Endothelial cell of umbilical vein (primary cell): ENCODE measurements at regions of chr15 and their contacts with region 1.

Region 1: GRCh38 chr15:95652544-95652943 is 678.0 kb upstream of the NR2F2 start:
- DNase-seq: no peak
- H3K4me3 ChIP-seq: no peak overlapping the region
- H3K27ac ChIP-seq: no peak overlapping the region
- H3K4me1 ChIP-seq: no peaks in the 10 kb centered on the region
- H3K27me3 ChIP-seq: no peaks in the 10 kb centered on the region
- CTCF ChIP-seq: no peak
- POLR2A ChIP-seq: no peak

Region 2: GRCh38 chr15:95059418-95059817 is 593.1 kb before region 1 on chr15:
- CTCF ChIA-PET with region 1: no interaction called
- POLR2A ChIA-PET with region 1: no interaction called
- dilution Hi-C with region 1: no loop called
- intact Hi-C with region 1: no loop called
- DNase-seq: no peak
- H3K4me3 ChIP-seq: no peak overlapping the region
- H3K27ac ChIP-seq: no peak overlapping the region
- H3K4me1 ChIP-seq: no peaks in the 10 kb centered on the region
- H3K27me3 ChIP-seq: no peaks in the 10 kb centered on the region
- CTCF ChIP-seq: no peak
- POLR2A ChIP-seq: no peak

Region 3: GRCh38 chr15:95639208-95639607 is 13.3 kb before region 1 on chr15:
- CTCF ChIA-PET with region 1: interaction called, 11 read pairs
- POLR2A ChIA-PET with region 1: no interaction called
- dilution Hi-C with region 1: no loop called
- intact Hi-C with region 1: no loop called
- DNase-seq: no peak
- H3K4me3 ChIP-seq: no peak overlapping the region
- H3K27ac ChIP-seq: no peak overlapping the region
- H3K4me1 ChIP-seq: no peaks in the 10 kb centered on the region
- H3K27me3 ChIP-seq: no peaks in the 10 kb centered on the region
- CTCF ChIP-seq: no peak
- POLR2A ChIP-seq: no peak

Region 4: DNA sequence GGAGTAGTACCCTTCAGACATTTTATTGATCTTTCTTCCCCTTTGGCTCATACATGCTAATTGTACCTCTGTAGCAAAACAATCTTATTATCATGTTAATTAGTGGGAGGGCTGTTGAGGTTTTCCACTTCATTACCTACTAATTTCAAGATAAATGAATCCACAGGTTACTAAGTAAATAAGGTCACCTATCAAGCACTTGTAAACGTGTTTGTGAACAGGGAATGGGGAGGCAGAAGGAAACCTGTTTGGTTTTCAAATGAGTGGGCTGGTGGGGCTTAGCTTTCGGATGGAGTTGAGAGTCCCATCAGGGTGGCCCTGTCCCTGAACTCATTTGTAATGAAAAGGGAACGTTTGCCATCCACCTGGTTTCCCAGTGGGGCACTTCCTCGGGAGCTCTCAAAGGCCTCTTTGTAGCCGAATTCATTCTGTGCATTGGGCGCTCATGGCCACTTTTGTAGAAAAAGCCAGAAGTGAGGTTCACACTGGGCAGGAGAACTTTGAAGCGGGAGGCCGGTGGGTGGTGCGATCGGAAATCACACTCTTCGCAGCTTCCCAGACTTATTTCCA is 258.2 kb after region 1 on chr15:
- CTCF ChIA-PET with region 1: no interaction called
- POLR2A ChIA-PET with region 1: no interaction called
- dilution Hi-C with region 1: no loop called
- intact Hi-C with region 1: no loop called
- DNase-seq: no peak
- H3K4me3 ChIP-seq: no peak overlapping the region
- H3K27ac ChIP-seq: no peak overlapping the region
- H3K4me1 ChIP-seq: no peaks in the 10 kb centered on the region
- H3K27me3 ChIP-seq: no peaks in the 10 kb centered on the region
- CTCF ChIP-seq: no peak
- POLR2A ChIP-seq: no peak